Testis (tissue), 5 donors: ENCODE measurements at regions of chr2 and their contacts with region 1.

Region 1: GRCh38 chr2:234550511-234551107 is 53.7 kb upstream of the ARL4C start:
- DNase-seq: peak; percentile 78
- H3K4me3 ChIP-seq: no peak overlapping the region
- H3K27ac ChIP-seq: no peak overlapping the region
- H3K4me1 ChIP-seq: no peaks in the 10 kb centered on the region
- H3K27me3 ChIP-seq: no peaks in the 10 kb centered on the region
- CTCF ChIP-seq: peak; percentile 82 to 91 (median 87)
- POLR2A ChIP-seq: no peak

Region 2: GRCh38 chr2:234335661-234336228 is 214.9 kb before region 1 on chr2:
- intact Hi-C with region 1: no loop called
- DNase-seq: peak; percentile 92
- H3K4me3 ChIP-seq: no peak overlapping the region
- H3K27ac ChIP-seq: peak overlapping the region; percentile 48 to 57
- H3K4me1 ChIP-seq: peaks cover 6% of the 10 kb centered on the region
- H3K27me3 ChIP-seq: no peaks in the 10 kb centered on the region
- CTCF ChIP-seq: no peak
- POLR2A ChIP-seq: no peak

Region 3: GRCh38 chr2:235106874-235107639 is 556.4 kb after region 1 on chr2:
- intact Hi-C with region 1: loop called (anchors 5 kb)
- DNase-seq: peak; percentile 86
- H3K4me3 ChIP-seq: no peak overlapping the region
- H3K27ac ChIP-seq: no peak overlapping the region
- H3K4me1 ChIP-seq: no peaks in the 10 kb centered on the region
- H3K27me3 ChIP-seq: no peaks in the 10 kb centered on the region
- CTCF ChIP-seq: peak; percentile 52 to 61 (median 55)
- POLR2A ChIP-seq: no peak